GM12878 (cell line): ENCODE measurements at regions of chr5 and their contacts with region 1.

Region 1: GRCh38 chr5:157575381-157576020 is at the start of gene ADAM19:
- DNase-seq: no peak
- ATAC-seq: peak; percentile 77
- H3K4me3 ChIP-seq: peak within 1 kb of the TSS; percentile 75
- H3K27ac ChIP-seq: peak within 1 kb of the TSS; percentile 67
- H3K4me1 ChIP-seq: peaks cover 51% of the 10 kb centered on the region
- H3K27me3 ChIP-seq: no peaks in the 10 kb centered on the region
- CTCF ChIP-seq: no peak
- EP300 ChIP-seq: no peak
- POLR2A ChIP-seq: peak; percentile 79
- RAD21 ChIP-seq: no peak
- polyA plus RNA-seq, gene ADAM19: 16.0 to 24.4 TPM

Region 2: DNA sequence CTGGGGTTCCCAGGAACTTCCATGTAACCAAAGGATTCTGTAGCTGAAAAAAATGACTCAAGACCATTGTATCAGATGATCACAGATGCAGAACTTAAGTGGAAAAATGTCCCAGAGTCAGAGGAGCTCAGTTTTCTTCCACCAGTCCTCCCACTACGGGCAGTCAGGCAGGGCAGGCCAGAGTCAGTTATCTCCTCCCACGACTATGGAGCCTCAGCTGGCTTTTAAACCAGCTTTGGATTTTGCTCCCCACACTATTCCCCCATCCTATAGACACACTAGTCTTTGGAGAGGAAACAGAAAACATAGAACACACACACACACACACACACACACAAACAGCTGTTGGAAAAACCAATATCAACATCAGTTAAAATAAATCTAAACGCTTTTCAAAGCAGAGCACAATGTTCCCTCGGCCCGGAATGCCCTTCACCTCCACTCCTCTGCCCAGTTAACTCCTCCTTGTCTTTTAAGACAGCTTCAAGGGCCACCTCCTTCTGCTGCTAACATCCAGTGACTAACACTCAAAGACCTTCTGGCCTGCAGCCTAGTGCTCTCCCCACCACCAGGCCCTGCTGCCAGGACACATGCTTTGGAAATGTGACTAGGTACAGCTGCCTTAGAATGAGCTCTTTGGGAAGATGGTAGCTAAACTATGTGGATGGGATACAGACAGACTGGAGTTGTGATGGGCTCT is 58.7 kb before region 1 on chr5:
- CTCF ChIA-PET with region 1: interaction called, 3 read pairs
- POLR2A ChIA-PET with region 1: interaction called, 4 read pairs
- RAD21 ChIA-PET with region 1: interaction called, 10 read pairs
- SMC1A ChIA-PET with region 1: interaction called, 46 read pairs
- in situ Hi-C with region 1: no loop called
- intact Hi-C with region 1: loop called (anchors 1 kb)
- DNase-seq: no peak
- ATAC-seq: no peak
- H3K4me3 ChIP-seq: no peak overlapping the region
- H3K27ac ChIP-seq: no peak overlapping the region
- H3K4me1 ChIP-seq: peaks cover 29% of the 10 kb centered on the region
- H3K27me3 ChIP-seq: no peaks in the 10 kb centered on the region
- CTCF ChIP-seq: no peak
- EP300 ChIP-seq: no peak
- POLR2A ChIP-seq: no peak
- RAD21 ChIP-seq: no peak

Region 3: GRCh38 chr5:157558041-157558595 is 17.4 kb before region 1 on chr5:
- CTCF ChIA-PET with region 1: interaction called, 3 read pairs
- POLR2A ChIA-PET with region 1: interaction called, 5 read pairs
- RAD21 ChIA-PET with region 1: interaction called, 5 read pairs
- SMC1A ChIA-PET with region 1: interaction called, 79 read pairs
- in situ Hi-C with region 1: no loop called
- intact Hi-C with region 1: no loop called
- DNase-seq: no peak
- ATAC-seq: no peak
- H3K4me3 ChIP-seq: no peak overlapping the region
- H3K27ac ChIP-seq: no peak overlapping the region
- H3K4me1 ChIP-seq: peaks cover 24% of the 10 kb centered on the region
- H3K27me3 ChIP-seq: no peaks in the 10 kb centered on the region
- CTCF ChIP-seq: no peak
- EP300 ChIP-seq: no peak
- POLR2A ChIP-seq: no peak
- RAD21 ChIP-seq: no peak

Region 4: DNA sequence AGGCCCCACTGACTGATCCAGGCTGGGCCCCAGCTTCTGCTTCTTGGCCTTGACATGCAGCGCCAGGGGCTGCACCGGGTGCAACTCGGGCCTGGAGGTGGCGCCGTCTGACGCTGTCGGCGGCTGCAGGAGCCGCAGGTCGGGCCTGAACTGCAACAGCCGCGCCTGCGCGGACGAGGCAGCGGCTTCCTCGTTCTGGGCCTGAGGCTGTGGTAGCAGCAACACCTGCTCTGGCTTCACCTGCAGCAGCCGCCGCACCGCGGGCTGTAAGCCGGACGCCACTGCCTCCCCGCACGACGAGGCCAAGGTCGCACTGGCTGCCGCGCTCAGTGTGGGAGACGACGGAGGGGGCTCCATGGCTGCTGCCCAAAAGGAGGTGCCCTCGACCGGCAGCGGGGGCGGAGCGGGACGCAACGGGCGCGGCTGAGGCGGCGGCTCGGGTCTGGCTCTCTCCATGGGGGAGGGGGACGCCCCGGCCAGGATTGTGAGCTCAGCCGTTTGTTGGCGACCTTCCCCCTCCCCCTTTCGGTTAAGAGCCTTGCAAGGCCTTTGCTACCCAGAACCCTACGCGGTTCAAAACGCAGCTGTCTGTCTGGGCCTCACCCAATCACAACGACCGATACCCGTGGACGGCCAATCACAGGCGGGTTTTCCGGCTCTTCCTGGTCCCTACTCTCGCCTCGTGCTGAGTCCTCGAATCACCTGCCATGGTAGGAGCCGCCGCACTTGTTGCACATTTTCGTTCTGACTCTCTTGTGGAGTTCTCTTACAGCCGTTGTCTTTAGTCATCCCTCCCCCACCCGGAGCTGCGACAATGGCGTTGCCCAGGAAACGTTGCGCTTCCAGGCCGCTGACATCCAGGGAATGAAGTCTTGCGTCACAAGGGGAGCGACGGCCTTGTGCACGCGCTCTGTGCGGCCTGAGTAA is 76.4 kb after region 1 on chr5 and contains the start of gene SOX30:
- CTCF ChIA-PET with region 1: no interaction called
- POLR2A ChIA-PET with region 1: no interaction called
- RAD21 ChIA-PET with region 1: interaction called, 5 read pairs
- SMC1A ChIA-PET with region 1: no interaction called
- in situ Hi-C with region 1: no loop called
- intact Hi-C with region 1: loop called (anchors 5 kb)
- DNase-seq: peak; percentile 21
- ATAC-seq: peak; percentile 98
- H3K4me3 ChIP-seq: no peak within 1 kb of the TSS; the same call in 1 of the 2 replicates
- H3K27ac ChIP-seq: no peak within 1 kb of the TSS
- H3K4me1 ChIP-seq: no peaks in the 10 kb centered on the region
- H3K27me3 ChIP-seq: no peaks in the 10 kb centered on the region
- CTCF ChIP-seq: peak; percentile 29 to 40 (median 32); a peak in 4 of 6 replicates
- EP300 ChIP-seq: no peak
- POLR2A ChIP-seq: peak; percentile 69
- RAD21 ChIP-seq: peak; percentile 36; the same call in 1 of the 2 replicates
- polyA plus RNA-seq, gene SOX30: 0.06 to 0.07 TPM

Region 5: DNA sequence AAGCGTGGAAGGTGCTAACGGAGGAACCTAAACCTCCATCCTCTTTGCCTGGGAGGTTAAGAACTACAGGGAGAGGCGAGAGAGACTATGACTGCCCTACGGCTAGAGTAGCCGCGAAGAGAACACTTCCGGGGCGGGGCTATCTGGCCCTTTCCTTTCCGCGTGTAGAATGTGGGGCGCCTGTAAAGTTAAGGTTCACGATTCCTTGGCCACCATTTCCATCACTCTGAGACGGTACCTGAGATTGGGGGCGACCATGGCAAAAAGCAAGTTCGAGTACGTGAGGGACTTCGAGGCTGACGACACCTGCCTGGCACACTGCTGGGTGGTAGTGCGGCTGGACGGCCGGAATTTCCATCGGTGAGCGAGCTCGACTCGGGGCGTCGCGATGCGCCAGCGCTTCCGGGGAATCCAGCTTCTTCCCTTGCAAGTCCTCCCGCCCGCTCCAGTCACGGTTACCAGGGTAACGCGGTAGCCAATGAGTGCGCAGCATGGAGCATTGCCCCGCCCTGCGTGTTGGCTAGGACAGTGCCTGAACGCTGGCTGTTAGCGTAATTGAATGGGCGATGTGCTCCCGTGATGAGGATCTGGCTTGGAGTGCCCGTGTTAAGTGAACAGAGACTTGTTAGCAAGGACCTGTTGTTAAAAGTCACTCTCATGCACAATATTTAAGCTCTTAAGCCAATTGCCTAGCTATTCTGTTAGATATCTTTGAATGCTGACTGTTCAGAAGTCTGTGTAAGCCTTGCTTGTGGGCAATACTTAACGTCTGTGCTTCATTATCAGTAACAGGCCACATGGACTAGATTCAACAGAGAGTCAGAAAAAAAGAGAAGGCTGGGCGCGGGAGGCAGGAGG is 156.0 kb after region 1 on chr5 and contains the start of gene THG1L:
- CTCF ChIA-PET with region 1: interaction called, 3 read pairs
- POLR2A ChIA-PET with region 1: no interaction called
- RAD21 ChIA-PET with region 1: interaction called, 3 read pairs
- SMC1A ChIA-PET with region 1: interaction called, 4 read pairs
- in situ Hi-C with region 1: no loop called
- intact Hi-C with region 1: loop called (anchors 5 kb)
- DNase-seq: peak; percentile 94
- ATAC-seq: peak; percentile 92
- H3K4me3 ChIP-seq: peak within 1 kb of the TSS; percentile 85
- H3K27ac ChIP-seq: peak within 1 kb of the TSS; percentile 92
- H3K4me1 ChIP-seq: peaks cover 21% of the 10 kb centered on the region
- H3K27me3 ChIP-seq: no peaks in the 10 kb centered on the region
- CTCF ChIP-seq: no peak
- EP300 ChIP-seq: no peak
- POLR2A ChIP-seq: peak; percentile 97
- RAD21 ChIP-seq: no peak
- polyA plus RNA-seq, gene THG1L: 37.2 to 58.0 TPM

Region 6: GRCh38 chr5:157778121-157778805 is 202.8 kb after region 1 on chr5:
- CTCF ChIA-PET with region 1: no interaction called
- POLR2A ChIA-PET with region 1: no interaction called
- RAD21 ChIA-PET with region 1: no interaction called
- SMC1A ChIA-PET with region 1: no interaction called
- in situ Hi-C with region 1: no loop called
- intact Hi-C with region 1: no loop called
- DNase-seq: no peak
- ATAC-seq: no peak
- H3K4me3 ChIP-seq: no peak overlapping the region
- H3K27ac ChIP-seq: no peak overlapping the region
- H3K4me1 ChIP-seq: no peaks in the 10 kb centered on the region
- H3K27me3 ChIP-seq: no peaks in the 10 kb centered on the region; a peak in 1 of 4 replicates
- CTCF ChIP-seq: no peak
- EP300 ChIP-seq: no peak
- POLR2A ChIP-seq: no peak
- RAD21 ChIP-seq: no peak